ENCODE measurements at regions of chr16 and their contacts with region 1.

Region 1: GRCh38 chr16:81723098-81723723 is 55.9 kb upstream of the PLCG2 start:
- DNase-seq: no peak
- ATAC-seq: peak; percentile 83
- H3K4me3 ChIP-seq: no peak overlapping the region
- H3K27ac ChIP-seq: no peak overlapping the region
- H3K4me1 ChIP-seq: no peaks in the 10 kb centered on the region
- H3K27me3 ChIP-seq: no peaks in the 10 kb centered on the region

Region 2: GRCh38 chr16:81366316-81366932 is 356.8 kb before region 1 on chr16:
- intact Hi-C with region 1: loop called in 1 of 2 experiments (anchors 10 kb)
- DNase-seq: no peak
- ATAC-seq: peak; percentile 73
- H3K4me3 ChIP-seq: no peak overlapping the region
- H3K27ac ChIP-seq: no peak overlapping the region
- H3K4me1 ChIP-seq: no peaks in the 10 kb centered on the region
- H3K27me3 ChIP-seq: no peaks in the 10 kb centered on the region

Region 3: GRCh38 chr16:81403616-81404373 is 319.4 kb before region 1 on chr16:
- intact Hi-C with region 1: loop called (anchors 1 to 2 kb)
- DNase-seq: peak; percentile 89 to 95
- ATAC-seq: peak; percentile 90
- H3K4me3 ChIP-seq: no peak overlapping the region
- H3K27ac ChIP-seq: no peak overlapping the region
- H3K4me1 ChIP-seq: no peaks in the 10 kb centered on the region
- H3K27me3 ChIP-seq: peaks cover 0 to 4% of the 10 kb centered on the region in 2 donors

Region 4: GRCh38 chr16:81623363-81624102 is 99.7 kb before region 1 on chr16:
- intact Hi-C with region 1: loop called in 1 of 2 experiments (anchors 10 kb)
- DNase-seq: no peak
- ATAC-seq: no peak
- H3K4me3 ChIP-seq: no peak overlapping the region
- H3K27ac ChIP-seq: no peak overlapping the region
- H3K4me1 ChIP-seq: no peaks in the 10 kb centered on the region
- H3K27me3 ChIP-seq: no peaks in the 10 kb centered on the region

Region 5: DNA sequence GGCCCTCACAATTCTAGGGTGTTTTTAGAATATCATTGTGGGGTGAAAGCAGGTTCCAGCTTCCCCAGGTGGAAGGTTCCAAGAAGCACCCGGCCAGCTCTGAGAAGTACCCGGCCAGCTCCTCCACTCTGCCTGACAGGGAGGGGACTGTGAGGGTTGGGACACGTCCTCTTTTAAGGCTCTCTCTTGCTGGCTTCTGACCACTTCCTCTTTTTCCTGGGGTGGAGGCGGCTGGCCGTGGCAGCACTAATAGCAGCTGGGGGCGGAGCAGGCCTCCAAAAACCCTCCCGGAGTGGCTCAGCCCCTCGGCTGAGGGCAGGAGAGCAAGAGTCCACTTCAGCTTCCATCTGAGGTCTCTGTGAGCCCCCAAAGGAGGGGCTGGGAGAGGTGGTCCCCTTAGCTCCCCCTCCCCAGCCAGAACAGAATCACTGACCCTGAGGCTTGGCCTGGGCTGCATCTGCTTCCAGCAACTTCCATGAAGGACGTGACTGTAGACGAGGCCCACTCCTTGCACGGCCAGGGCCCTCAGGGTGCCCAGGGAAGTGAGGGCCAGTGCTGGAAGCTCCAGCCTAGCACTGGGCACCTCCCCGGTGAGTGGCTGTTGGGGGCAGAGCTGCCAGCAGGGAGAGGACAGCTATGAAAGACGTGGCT is 29.1 kb after region 1 on chr16:
- intact Hi-C with region 1: no loop called
- DNase-seq: peak in 1 of 2 donors; percentile 85
- ATAC-seq: peak; percentile 76
- H3K4me3 ChIP-seq: no peak overlapping the region
- H3K27ac ChIP-seq: no peak overlapping the region
- H3K4me1 ChIP-seq: no peaks in the 10 kb centered on the region
- H3K27me3 ChIP-seq: no peaks in the 10 kb centered on the region